ENCODE measurements at regions of chr17 and their contacts with region 1.

Region 1: GRCh38 chr17:58317421-58318064 is 11.1 kb downstream of the TSPOAP1 start:
- DNase-seq: peak; percentile 89
- ATAC-seq: peak; percentile 98
- H3K4me3 Mint-ChIP-seq: peak overlapping the region; percentile 20
- H3K27ac Mint-ChIP-seq: peak overlapping the region; percentile 90
- H3K4me1 Mint-ChIP-seq: peaks cover 15% of the 10 kb centered on the region
- H3K27me3 Mint-ChIP-seq: no peaks in the 10 kb centered on the region
- CTCF ChIP-seq: peak; percentile 78

Region 2: DNA sequence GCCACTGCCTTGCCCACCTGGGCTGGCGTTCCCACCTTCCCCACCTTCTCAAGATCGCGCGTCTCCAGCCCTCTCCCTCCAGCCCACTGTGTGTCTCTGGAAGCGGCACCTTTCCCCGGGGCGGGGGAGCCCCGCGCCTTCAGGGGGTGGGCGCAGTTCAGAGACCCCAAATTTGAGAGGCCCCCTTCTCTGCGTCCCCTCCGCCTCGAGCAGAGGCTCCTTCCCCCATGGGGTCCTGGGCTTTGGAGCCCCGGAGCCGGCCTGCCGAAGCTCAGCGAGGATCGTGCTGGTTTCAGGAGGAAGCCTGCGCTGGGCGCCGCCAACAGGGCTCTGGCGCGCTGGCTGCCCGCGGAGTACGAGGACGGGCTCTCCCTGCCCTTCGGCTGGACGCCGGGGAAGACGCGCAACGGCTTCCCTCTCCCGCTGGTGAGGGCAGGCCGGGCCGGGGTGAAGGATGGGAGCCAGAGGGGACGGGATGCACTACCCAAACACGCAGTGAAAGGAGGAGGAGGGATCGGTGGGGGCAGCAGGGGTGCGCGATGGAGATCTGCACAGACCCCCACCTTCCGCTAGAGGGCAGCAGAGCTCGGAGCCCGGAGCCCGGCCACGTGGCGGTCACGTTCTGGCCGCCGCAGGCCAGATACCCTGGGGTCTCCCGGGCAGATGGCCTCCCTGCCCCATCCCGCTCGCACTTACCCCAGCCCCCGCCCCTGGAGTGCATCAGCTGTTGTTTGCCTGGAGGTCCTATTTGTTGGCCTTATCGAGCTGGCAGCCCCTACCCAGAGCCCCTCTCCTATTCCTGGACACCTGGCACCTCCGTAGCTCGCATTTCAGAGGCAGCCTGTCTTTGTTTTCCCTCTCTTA is 68.0 kb before region 1 on chr17:
- CTCF ChIA-PET with region 1: interaction called, 11 read pairs
- POLR2A ChIA-PET with region 1: no interaction called
- intact Hi-C with region 1: no loop called
- DNase-seq: peak; percentile 77
- ATAC-seq: peak; percentile 95
- H3K4me3 Mint-ChIP-seq: peak overlapping the region; percentile 67
- H3K27ac Mint-ChIP-seq: peak overlapping the region; percentile 16
- H3K4me1 Mint-ChIP-seq: peaks cover 10% of the 10 kb centered on the region
- H3K27me3 Mint-ChIP-seq: peaks cover 7% of the 10 kb centered on the region
- CTCF ChIP-seq: peak; percentile 98

Region 3: GRCh38 chr17:58337600-58338453 is 20.3 kb after region 1 on chr17:
- CTCF ChIA-PET with region 1: interaction called, 161 read pairs
- POLR2A ChIA-PET with region 1: interaction called, 1,558 read pairs
- intact Hi-C with region 1: no loop called
- DNase-seq: peak; percentile 98
- ATAC-seq: peak; percentile 60
- H3K4me3 Mint-ChIP-seq: peak overlapping the region; percentile 81
- H3K27ac Mint-ChIP-seq: peak overlapping the region; percentile 96
- H3K4me1 Mint-ChIP-seq: peaks cover 3% of the 10 kb centered on the region
- H3K27me3 Mint-ChIP-seq: no peaks in the 10 kb centered on the region
- CTCF ChIP-seq: no peak

Region 4: DNA sequence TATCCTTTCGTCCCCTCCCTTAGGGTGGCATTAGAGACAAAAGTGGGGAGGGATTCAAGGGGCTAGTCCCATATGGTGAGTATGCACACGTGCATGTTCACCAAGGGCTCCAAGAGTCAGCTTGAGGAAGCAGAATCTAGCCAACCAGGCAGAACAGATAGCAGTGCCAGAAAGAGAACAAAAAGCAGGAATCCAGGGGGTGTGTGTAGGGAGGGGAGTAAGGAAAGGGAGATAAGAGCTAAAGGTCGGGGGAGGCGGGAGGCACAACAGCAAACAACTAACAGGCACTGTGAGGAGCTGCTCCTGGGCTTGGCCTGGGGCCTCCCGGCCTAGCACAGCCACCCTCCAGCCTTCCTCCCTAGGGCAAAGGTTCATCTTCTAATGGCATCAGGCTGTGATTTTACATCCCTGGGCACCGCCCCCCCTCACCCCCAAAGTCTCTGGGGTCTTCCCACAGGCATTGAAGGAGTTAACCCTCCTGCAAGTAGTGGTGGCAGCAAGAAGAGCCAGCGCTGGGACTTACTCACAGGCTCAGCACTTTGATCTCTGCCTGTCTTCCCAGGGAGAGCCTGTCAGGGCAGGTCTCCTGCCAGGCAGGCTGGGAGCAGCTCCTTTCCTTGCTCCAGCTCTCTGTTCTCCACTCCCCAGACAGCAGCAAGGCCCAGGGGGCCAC is 46.9 kb after region 1 on chr17:
- CTCF ChIA-PET with region 1: interaction called, 13 read pairs
- POLR2A ChIA-PET with region 1: interaction called, 4 read pairs
- intact Hi-C with region 1: no loop called
- DNase-seq: no peak
- ATAC-seq: no peak
- H3K4me3 Mint-ChIP-seq: no peak overlapping the region
- H3K27ac Mint-ChIP-seq: peak overlapping the region; percentile 46
- H3K4me1 Mint-ChIP-seq: peaks cover 8% of the 10 kb centered on the region
- H3K27me3 Mint-ChIP-seq: no peaks in the 10 kb centered on the region
- CTCF ChIP-seq: no peak

Region 5: DNA sequence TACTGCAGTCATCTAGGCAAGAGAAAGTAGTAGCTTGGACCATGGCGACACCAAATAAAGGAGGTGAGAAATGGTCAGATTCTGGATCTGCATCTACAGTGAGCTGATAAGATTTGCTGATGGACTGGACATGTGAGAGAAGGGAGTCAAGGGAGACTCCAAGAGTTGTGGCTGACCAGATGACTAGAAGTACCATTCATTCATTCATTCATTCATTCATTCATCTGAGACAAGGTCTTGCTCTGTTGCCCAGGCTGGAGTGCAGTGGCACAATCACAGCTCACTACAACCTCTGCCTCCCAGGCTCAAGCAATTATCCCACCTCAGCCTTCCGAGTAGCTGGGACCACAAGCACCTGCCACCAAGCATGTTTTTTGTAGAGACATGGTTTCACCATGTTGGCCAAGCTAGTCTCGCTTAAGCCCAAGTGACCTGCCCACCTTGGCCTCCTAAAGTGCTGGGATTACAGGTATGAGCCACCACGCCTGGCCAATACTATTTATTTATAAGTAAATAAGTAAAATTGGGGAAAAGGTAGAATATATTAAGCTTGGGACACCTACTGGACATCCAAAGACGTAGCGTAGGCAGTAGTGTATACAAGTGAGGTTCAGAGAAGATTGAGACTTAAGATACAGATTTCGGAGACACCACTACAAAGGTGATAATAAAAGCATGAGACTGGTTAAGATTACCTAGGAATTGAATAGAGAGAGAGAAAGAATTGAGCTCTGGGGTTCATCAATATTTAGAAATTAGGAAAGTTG is 115.4 kb after region 1 on chr17:
- CTCF ChIA-PET with region 1: interaction called, 17 read pairs
- POLR2A ChIA-PET with region 1: no interaction called
- intact Hi-C with region 1: no loop called
- DNase-seq: no peak
- ATAC-seq: no peak
- H3K4me3 Mint-ChIP-seq: no peak overlapping the region
- H3K27ac Mint-ChIP-seq: no peak overlapping the region
- H3K4me1 Mint-ChIP-seq: no peaks in the 10 kb centered on the region
- H3K27me3 Mint-ChIP-seq: no peaks in the 10 kb centered on the region
- CTCF ChIP-seq: no peak

Region 6: DNA sequence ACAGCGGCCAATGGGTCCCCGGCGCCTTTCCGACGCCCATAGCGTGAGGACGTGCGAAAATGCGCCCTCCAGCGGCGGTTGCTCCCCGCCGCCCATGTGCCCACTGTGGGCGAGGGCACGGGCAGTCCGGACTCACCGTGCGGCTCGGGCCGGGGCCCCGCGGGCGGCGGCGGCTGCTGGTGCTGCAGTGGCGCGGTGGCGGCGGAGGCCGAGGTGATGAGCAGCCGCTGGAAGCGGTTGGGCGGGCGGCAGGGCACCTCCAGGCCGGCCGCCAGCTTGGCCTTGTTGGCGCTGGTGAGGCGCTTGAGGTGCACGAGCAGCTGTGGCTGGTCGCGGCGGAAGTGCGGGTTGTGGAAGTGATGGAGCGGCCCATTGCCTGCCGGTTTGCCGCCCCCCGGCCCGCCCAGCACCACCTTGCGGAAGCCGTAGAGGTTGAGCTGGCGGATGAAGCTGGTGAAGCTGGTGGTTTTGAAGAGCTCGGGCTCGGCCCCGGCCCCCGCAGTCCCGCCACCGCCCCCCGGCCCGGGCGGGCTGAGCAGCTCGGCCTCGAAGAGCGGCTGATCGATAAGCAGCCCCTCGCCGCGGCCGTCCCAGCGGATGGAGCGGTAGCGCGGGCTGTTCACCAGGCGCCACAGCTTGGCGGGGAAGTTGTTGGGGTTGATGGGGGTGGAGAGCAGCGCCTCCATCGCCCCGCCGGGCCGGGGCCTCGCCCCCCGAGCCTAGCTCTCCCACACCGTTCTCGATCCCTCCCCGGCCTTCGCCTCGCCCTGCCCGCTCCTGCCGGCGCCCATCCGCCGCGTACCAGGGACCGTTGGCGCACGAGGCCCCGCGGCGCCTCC is 170.3 kb after region 1 on chr17 and contains the start of gene HSF5:
- CTCF ChIA-PET with region 1: interaction called, 19 read pairs
- POLR2A ChIA-PET with region 1: interaction called, 3 read pairs
- intact Hi-C with region 1: no loop called
- DNase-seq: peak; percentile 80
- ATAC-seq: peak; percentile 76
- H3K4me3 Mint-ChIP-seq: peak within 1 kb of the TSS; percentile 51
- H3K27ac Mint-ChIP-seq: peak within 1 kb of the TSS; percentile 53
- H3K4me1 Mint-ChIP-seq: peaks cover 18% of the 10 kb centered on the region
- H3K27me3 Mint-ChIP-seq: no peaks in the 10 kb centered on the region
- CTCF ChIP-seq: peak; percentile 85
- total RNA-seq, gene HSF5: 3.2 to 3.9 TPM

Measured in activated CD8-positive, alpha-beta T cell treated with anti-CD3 and anti-CD28 coated beads for 36 hours (primary cell).